Activated T-helper 1 cell treated with anti-CD3 and anti-CD28 coated beads, Interleukin-12 subunit alpha, Interleukin-12 subunit beta, Interleukin-2, Interleukin-4 antibody, amounts not matched to agents 30 ng/mL and 10 ng/mL and 1 ng/mL, durations not matched to agents 14 hours and 24 hours and 36 hours (primary cell): ENCODE measurements at regions of chr17 and their contacts with region 1.

Region 1: GRCh38 chr17:73231841-73232586 is 29.7 kb downstream of the CPSF4L start:
- DNase-seq: peak; percentile 97
- H3K4me3 Mint-ChIP-seq: peak overlapping the region; percentile 97
- H3K27ac Mint-ChIP-seq: peak overlapping the region; percentile 95
- H3K4me1 Mint-ChIP-seq: peaks cover 57% of the 10 kb centered on the region
- H3K27me3 Mint-ChIP-seq: no peaks in the 10 kb centered on the region

Region 2: GRCh38 chr17:72592242-72592966 is 639.6 kb before region 1 on chr17:
- intact Hi-C with region 1: loop called (anchors 5 kb)
- DNase-seq: peak; percentile 66
- H3K4me3 Mint-ChIP-seq: peak overlapping the region; percentile 88
- H3K27ac Mint-ChIP-seq: peak overlapping the region; percentile 24
- H3K4me1 Mint-ChIP-seq: peaks cover 37% of the 10 kb centered on the region
- H3K27me3 Mint-ChIP-seq: peaks cover 50% of the 10 kb centered on the region

Region 3: DNA sequence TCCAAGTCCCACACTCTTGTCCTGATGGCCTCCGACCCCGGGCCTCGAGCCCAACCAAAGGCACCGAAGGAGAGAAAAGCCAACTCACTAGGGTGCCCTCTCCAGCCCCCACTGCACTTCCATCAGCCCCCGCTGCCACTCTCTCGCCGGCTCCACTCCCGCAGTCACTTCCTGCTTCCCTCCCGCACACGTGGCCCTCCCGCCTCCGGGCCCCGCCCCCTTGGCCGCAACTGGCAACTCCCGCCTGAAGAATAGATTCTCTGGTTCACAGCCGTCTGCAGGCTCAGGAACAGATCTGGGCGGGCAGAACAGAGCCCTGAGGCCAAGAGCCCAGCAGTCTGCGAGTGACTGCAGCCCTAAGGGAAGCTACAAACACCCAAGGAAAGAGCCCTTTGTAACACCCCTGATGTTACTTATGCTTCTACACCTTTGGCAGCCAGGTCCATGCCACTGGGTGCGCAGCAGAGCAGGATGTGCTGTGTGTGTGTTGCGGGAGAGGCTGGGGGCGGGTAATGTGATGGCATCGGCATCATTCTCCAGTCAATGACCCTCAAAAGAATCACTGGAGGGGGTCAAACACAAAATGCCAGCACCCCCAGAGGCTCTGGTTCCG is 139.4 kb before region 1 on chr17 and contains the start of gene SLC39A11:
- intact Hi-C with region 1: loop called (anchors 1 kb)
- DNase-seq: peak; percentile 89
- H3K4me3 Mint-ChIP-seq: peak within 1 kb of the TSS; percentile 100
- H3K27ac Mint-ChIP-seq: peak within 1 kb of the TSS; percentile 98
- H3K4me1 Mint-ChIP-seq: peaks cover 22% of the 10 kb centered on the region
- H3K27me3 Mint-ChIP-seq: peaks cover 6% of the 10 kb centered on the region
- total RNA-seq, gene SLC39A11: 20.9 and 25.7 TPM in 2 replicates

Region 4: GRCh38 chr17:73210002-73210678 is 21.9 kb before region 1 on chr17:
- intact Hi-C with region 1: loop called (anchors 2 kb)
- DNase-seq: no peak
- H3K4me3 Mint-ChIP-seq: no peak overlapping the region
- H3K27ac Mint-ChIP-seq: peak overlapping the region; percentile 67
- H3K4me1 Mint-ChIP-seq: peaks cover 33% of the 10 kb centered on the region
- H3K27me3 Mint-ChIP-seq: no peaks in the 10 kb centered on the region